Dorsolateral prefrontal cortex (tissue), 120 donors: ENCODE measurements at regions of chr2 and their contacts with region 1.

Region 1: GRCh38 chr2:39304200-39304599 is 60.4 kb upstream of the CDKL4 start:
- DNase-seq: no peak
- H3K4me3 ChIP-seq: no peak overlapping the region
- H3K27ac ChIP-seq: no peak overlapping the region
- H3K27me3 ChIP-seq: no peaks in the 10 kb centered on the region
- CTCF ChIP-seq: no peak

Region 2: DNA sequence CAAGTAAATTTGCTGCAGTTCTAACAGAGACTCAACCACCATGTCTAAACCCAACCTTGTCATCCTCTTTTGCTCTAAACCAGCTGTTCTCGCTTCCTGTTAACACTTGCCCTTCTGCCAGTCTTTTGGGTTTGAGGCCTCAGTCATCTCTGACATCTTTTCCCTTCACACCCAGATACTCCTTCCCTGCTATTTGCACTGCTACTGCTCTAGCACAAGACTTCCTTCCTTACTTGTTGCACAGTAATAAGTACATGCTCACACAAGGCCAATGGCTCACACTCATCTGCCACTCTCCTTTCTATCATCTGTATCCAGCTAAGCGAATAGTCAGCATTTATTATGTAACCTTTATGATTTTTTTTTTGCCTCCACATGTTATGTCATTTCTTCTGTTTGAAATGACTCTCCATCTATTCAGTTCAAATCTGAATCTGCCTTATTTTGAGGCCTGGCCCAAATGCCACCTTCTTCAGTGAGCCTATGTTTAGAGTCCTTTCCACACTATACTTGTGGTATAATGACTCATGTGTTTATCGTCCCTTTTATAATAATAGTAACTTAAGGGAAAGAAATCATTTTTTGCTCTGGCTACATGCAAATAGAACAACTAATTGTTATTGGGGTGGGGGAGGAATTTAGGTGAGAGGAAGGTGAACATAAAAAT is 37.9 kb before region 1 on chr2:
- intact Hi-C with region 1: loop called in 1 of 2 experiments (anchors 2 kb)
- DNase-seq: no peak
- H3K4me3 ChIP-seq: no peak overlapping the region
- H3K27ac ChIP-seq: no peak overlapping the region
- H3K27me3 ChIP-seq: no peaks in the 10 kb centered on the region
- CTCF ChIP-seq: no peak

Region 3: GRCh38 chr2:39356922-39357639 is 52.9 kb after region 1 on chr2:
- intact Hi-C with region 1: loop called in 1 of 2 experiments (anchors 10 kb)
- DNase-seq: peak in 1 of 10 donors; percentile 16
- H3K4me3 ChIP-seq: no peak overlapping the region
- H3K27ac ChIP-seq: peak overlapping the region in 48 of 59 donors; percentile 3 to 82 (median 54)
- H3K27me3 ChIP-seq: no peaks in the 10 kb centered on the region
- CTCF ChIP-seq: peak in 10 of 56 donors; percentile 10 to 30 (median 16)

Region 4: GRCh38 chr2:40168041-40168442 is 863.8 kb after region 1 on chr2:
- intact Hi-C with region 1: no loop called
- DNase-seq: no peak
- H3K4me3 ChIP-seq: no peak overlapping the region
- H3K27ac ChIP-seq: no peak overlapping the region
- H3K27me3 ChIP-seq: no peaks in the 10 kb centered on the region
- CTCF ChIP-seq: no peak

Region 5: GRCh38 chr2:40584432-40584831 is 1280.2 kb after region 1 on chr2:
- intact Hi-C with region 1: no loop called
- DNase-seq: no peak
- H3K4me3 ChIP-seq: no peak overlapping the region
- H3K27ac ChIP-seq: no peak overlapping the region
- H3K27me3 ChIP-seq: peaks cover 0 to 5% (median 0%) of the 10 kb centered on the region in 45 donors
- CTCF ChIP-seq: no peak